PC-9 (cell line): ENCODE measurements at regions of chr15 and their contacts with region 1.

Region 1: DNA sequence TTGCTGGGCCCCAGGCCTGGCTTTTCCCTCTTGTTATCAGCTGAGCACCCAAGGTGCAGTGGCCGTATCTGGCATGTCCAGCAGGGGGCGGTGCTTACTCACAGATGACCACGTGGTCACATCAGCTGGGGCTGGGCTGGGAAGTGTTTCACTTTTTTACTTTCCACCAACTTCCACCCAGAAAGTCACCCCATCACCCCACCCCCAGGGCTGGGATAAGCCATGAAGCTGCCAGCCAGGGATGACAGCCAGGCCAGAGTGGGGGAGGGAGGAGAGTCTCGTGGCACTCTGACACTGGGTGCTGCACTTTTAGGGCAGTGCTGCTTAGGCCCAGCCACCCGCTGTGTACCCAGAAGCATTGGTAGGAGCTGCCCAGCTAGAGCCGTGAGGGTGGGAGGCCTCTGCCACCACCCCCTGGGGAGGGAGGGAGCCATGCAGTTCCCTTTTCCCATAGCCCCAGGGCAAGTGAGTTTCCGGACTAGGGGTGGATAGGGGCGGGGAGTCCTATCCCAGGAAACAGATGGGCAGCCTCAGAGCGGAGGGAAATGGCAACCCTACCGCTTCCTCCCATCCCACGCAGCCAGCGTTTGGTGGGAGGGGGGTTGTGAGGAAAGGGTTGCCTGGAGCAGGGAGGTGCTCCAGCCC is 6.1 kb downstream of the PPCDC start:
- DNase-seq: peak; percentile 72 to 87
- H3K4me3 ChIP-seq: no peak overlapping the region
- H3K27ac ChIP-seq: peak overlapping the region; percentile 19; the same call in 1 of the 2 replicates
- H3K4me1 ChIP-seq: peaks cover 38% of the 10 kb centered on the region
- H3K27me3 ChIP-seq: no peaks in the 10 kb centered on the region
- CTCF ChIP-seq: peak; percentile 94

Region 2: DNA sequence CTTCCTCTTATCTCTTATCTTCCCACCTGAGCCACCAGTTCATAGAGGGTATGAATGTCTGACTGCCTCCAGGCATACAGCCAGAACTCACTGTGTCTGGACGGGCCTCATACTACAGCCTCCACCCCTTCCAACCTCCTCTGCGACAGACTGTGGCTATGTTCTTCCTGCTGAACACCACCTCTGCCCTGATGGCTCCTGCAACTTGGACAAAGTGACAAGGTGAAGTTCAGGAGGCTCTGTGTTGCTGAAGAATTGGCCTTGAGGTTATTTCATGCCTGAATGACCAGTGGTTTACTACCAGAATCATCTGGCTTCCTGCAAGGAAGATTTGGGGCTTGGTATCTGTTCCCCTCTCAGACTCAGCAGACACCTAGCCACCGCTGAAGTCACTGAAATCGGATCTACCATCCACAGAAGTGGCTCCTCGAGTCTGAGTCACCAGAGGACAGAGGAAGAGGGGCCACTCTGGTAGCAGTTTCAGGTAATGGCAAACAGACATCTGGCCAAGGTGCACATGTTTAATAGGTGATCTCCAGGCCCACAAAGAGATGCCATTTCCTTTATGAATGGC is 172.3 kb before region 1 on chr15:
- CTCF ChIA-PET with region 1: interaction called, 15 read pairs
- POLR2A ChIA-PET with region 1: no interaction called
- intact Hi-C with region 1: no loop called
- DNase-seq: peak; percentile 69 to 70
- H3K4me3 ChIP-seq: no peak overlapping the region
- H3K27ac ChIP-seq: peak overlapping the region; percentile 49
- H3K4me1 ChIP-seq: peaks cover 21% of the 10 kb centered on the region
- H3K27me3 ChIP-seq: no peaks in the 10 kb centered on the region
- CTCF ChIP-seq: no peak

Region 3: DNA sequence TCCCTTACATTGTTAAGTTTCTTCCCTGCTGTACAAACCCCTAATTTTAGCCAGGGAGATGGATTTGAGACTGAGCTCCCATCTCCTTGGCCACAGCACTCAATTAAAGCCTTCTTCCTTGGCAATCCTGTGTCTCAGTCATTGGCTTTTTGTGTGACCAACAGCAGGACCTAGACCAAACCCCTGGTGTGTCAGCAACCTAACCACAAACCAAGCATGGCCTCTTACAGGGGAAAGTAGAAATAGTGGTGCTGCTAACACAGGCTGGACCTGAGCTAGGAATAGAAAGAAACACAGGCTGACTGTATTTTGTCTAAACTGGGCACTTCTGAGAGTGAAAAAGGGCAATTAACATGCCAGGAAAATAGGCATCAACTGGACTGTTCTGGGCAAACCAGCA is 31.8 kb after region 1 on chr15:
- CTCF ChIA-PET with region 1: no interaction called
- POLR2A ChIA-PET with region 1: no interaction called
- intact Hi-C with region 1: no loop called
- DNase-seq: no peak
- H3K4me3 ChIP-seq: no peak overlapping the region
- H3K27ac ChIP-seq: no peak overlapping the region
- H3K4me1 ChIP-seq: peaks cover 39% of the 10 kb centered on the region
- H3K27me3 ChIP-seq: no peaks in the 10 kb centered on the region
- CTCF ChIP-seq: no peak

Region 4: DNA sequence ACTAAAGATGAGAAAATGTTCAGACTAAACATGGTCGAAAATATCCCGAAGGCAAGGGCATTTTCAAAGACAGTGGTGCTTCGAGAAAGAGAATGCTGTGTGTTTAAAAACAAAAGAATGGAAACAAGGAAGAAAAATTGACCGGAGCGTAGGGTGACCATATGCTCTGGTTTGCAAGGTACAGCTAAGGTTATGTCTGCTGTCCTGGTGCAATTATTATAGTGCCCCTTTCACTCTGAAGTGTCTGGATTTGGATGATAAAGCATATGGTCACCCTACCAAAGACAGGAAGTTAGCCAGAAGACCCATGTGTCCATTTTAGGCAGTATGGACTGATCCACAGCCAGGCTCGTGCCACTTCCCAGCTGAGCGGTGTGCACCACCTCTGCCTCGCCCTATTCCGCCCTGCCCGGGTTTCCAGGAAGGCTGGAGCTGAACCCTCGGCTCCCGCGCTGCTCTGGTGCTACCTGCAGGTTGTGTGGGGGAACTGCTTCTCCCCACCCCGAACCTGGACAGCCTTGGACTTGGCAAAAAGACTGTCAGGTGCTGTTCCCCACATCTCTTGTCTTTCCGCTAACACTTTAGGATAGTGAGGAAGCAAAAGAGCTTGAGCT is 278.4 kb after region 1 on chr15:
- CTCF ChIA-PET with region 1: interaction called, 3 read pairs
- POLR2A ChIA-PET with region 1: no interaction called
- intact Hi-C with region 1: loop called (anchors 1 kb)
- DNase-seq: peak; percentile 51 to 73
- H3K4me3 ChIP-seq: no peak overlapping the region; the same call in 1 of the 2 replicates
- H3K27ac ChIP-seq: no peak overlapping the region
- H3K4me1 ChIP-seq: 0 out of 2 replicates have a peak, but pooled peaks cover 4% of the 10 kb centered on the region
- H3K27me3 ChIP-seq: peaks cover 6% of the 10 kb centered on the region
- CTCF ChIP-seq: peak; percentile 79